ENCODE measurements at regions of chr11 and their contacts with region 1.

Region 1: DNA sequence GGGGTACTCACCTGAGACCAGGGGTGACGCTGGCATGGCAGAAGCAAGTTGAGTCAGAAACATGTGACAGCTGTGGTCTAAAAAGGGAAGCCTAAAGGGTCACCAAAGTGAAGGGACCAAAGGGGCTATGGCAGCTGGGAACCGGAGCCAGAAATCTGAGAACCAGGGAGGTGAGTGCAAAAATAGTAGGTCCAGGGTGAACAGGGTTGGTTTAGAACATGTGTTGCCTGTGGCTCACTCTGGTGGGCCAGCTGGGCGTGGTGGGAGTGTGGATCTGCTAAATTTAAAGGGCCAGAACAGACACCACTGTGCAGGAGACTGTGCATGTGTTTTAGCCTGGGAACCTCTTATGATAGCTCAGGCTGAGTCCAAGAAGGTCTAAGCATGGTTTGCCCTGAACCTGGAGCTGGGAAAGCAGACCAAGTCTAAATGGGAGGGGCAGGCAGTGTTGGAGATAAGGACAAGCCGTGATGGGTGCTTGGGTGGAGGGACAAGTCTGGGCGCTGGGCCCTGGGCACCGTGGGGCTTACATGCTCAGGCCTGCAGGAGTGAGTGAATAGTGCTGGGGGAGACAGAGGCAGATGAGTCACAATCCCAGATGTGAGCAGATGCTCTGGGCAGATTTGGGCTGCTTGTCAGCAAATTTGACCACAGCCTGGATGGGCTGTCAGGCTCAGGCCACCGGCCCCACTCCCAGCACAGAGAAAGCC is 41.4 kb upstream of the ZBED5 start:
- DNase-seq: peak; percentile 72 to 94 (median 80)
- ATAC-seq: peak; percentile 86
- H3K4me3 ChIP-seq: peak overlapping the region; percentile 1; the same call in 1 of the 2 replicates
- H3K27ac ChIP-seq: peak overlapping the region; percentile 98
- H3K4me1 ChIP-seq: peaks cover 46 to 67% of the 10 kb centered on the region in 2 experiments
- H3K27me3 ChIP-seq: no peaks in the 10 kb centered on the region
- CTCF ChIP-seq: no peak
- EP300 ChIP-seq: peak; percentile 85
- POLR2A ChIP-seq: peak; percentile 57
- RAD21 ChIP-seq: no peak

Region 2: DNA sequence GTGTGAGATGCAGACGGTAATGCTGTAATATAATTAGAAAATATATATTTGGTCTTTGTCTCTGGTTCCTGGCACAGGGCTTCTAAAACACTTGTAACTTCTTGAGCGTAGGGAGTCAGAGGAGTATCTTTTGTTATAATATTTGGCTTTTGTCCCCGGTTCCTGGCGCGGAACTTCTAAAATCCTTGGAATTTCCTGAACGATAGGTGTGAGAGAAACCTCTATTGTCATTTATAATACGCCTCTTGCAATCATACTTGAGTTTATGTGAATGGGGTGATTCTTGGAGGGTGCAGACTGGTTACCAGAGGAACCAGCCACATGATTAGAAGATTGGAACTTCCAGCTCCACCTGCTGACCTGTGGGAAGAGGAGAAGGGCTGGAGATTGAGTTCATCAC is 12.6 kb after region 1 on chr11:
- CTCF ChIA-PET with region 1: no interaction called
- POLR2A ChIA-PET with region 1: interaction called, 21 read pairs
- in situ Hi-C with region 1: no loop called
- intact Hi-C with region 1: no loop called
- DNase-seq: no peak
- ATAC-seq: no peak
- H3K4me3 ChIP-seq: no peak overlapping the region
- H3K27ac ChIP-seq: no peak overlapping the region
- H3K4me1 ChIP-seq: peaks cover 7 to 14% of the 10 kb centered on the region in 2 experiments; a peak in 4 of 5 replicates
- H3K27me3 ChIP-seq: no peaks in the 10 kb centered on the region
- CTCF ChIP-seq: no peak
- EP300 ChIP-seq: no peak
- POLR2A ChIP-seq: no peak
- RAD21 ChIP-seq: no peak

Region 3: DNA sequence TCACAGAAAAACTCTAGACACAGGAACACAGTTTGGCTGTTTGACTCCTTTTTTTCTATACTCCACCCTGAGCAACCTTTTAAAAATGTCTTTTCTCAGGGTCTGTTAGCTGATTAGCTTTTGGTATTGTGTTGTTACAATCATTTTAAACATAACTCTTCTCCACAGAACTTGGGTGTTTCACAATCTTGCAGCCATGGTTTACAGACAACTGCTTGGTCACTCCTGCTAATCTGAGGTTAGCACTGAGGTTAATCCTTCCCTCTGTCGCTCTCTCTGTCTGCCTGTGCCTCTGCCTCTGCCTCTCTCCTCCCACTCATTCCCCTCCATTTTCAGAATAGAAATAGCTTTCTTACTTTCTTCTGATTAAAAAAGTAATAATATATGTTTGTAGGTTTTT is 20.9 kb after region 1 on chr11:
- CTCF ChIA-PET with region 1: no interaction called
- POLR2A ChIA-PET with region 1: interaction called, 6 read pairs
- in situ Hi-C with region 1: no loop called
- intact Hi-C with region 1: loop called (anchors 1 kb)
- DNase-seq: peak; percentile 52 to 91 (median 72)
- ATAC-seq: peak; percentile 99
- H3K4me3 ChIP-seq: no peak overlapping the region
- H3K27ac ChIP-seq: peak overlapping the region; percentile 93
- H3K4me1 ChIP-seq: peaks cover 0 to 20% of the 10 kb centered on the region in 2 experiments; a peak in 3 of 5 replicates
- H3K27me3 ChIP-seq: no peaks in the 10 kb centered on the region
- CTCF ChIP-seq: no peak
- EP300 ChIP-seq: peak; percentile 82; the same call in 1 of the 2 replicates
- POLR2A ChIP-seq: no peak; the same call in 1 of the 2 replicates
- RAD21 ChIP-seq: peak in 1 of 2 experiments; percentile 8; a peak in 1 of 4 replicates